Colonic mucosa (tissue), 4 donors: ENCODE measurements at regions of chr7 and their contacts with region 1.

Region 1: DNA sequence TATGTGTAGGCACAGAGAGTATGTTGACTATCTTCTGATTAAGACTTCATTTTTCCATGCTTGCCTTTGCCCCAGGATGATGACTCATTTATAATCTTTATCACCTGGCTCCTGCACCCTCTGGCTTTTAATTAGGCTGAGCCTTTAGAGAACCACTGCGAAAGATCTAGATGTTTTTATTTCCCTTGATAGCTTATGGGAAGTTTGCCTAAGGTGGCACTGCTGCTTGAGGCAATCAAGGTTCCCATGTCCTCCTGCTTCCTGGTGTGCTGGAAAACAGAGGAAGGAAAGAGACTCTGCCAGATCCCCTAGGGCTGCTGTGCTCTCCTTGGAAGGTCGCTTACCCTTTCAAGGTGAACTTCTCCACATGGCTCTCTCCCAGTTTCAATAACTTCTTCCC is 114.7 kb downstream of the ARL4A start:
- DNase-seq: peak; percentile 69
- H3K4me3 ChIP-seq: no peak overlapping the region
- H3K27ac ChIP-seq: peak overlapping the region; percentile 75
- H3K4me1 ChIP-seq: peaks cover 6% of the 10 kb centered on the region
- H3K27me3 ChIP-seq: no peaks in the 10 kb centered on the region
- CTCF ChIP-seq: no peak

Region 2: GRCh38 chr7:12695965-12696364 is 106.1 kb before region 1 on chr7:
- intact Hi-C with region 1: loop called (anchors 10 kb)
- DNase-seq: no peak
- H3K4me3 ChIP-seq: no peak overlapping the region
- H3K27ac ChIP-seq: no peak overlapping the region
- H3K4me1 ChIP-seq: no peaks in the 10 kb centered on the region
- H3K27me3 ChIP-seq: no peaks in the 10 kb centered on the region
- CTCF ChIP-seq: no peak